ENCODE measurements at regions of chr6 and their contacts with region 1.

Region 1: DNA sequence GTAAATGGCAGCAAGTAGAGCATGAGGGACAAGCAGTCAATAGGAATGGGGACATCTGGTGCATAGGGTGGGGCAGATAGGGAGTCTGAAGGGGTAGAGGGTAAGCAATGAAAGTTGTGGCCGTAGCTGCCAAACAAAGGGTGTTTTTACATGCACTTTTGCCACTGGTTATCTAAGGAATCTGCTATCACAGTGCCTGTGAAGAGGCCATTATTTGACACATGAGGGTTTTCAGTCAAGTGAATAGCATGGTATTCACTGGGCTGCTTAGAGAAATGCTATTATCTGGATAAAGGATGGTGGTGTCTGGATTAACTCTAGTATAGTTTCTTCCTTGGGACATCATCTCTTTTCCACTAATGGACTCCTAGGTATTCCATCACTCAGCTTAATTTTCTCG is 118.2 kb downstream of the CARMIL1 start:
- DNase-seq: no peak
- H3K4me3 ChIP-seq: no peak overlapping the region
- H3K27ac ChIP-seq: no peak overlapping the region
- H3K4me1 ChIP-seq: peaks cover 10% of the 10 kb centered on the region
- H3K27me3 ChIP-seq: no peaks in the 10 kb centered on the region
- CTCF ChIP-seq: no peak

Region 2: DNA sequence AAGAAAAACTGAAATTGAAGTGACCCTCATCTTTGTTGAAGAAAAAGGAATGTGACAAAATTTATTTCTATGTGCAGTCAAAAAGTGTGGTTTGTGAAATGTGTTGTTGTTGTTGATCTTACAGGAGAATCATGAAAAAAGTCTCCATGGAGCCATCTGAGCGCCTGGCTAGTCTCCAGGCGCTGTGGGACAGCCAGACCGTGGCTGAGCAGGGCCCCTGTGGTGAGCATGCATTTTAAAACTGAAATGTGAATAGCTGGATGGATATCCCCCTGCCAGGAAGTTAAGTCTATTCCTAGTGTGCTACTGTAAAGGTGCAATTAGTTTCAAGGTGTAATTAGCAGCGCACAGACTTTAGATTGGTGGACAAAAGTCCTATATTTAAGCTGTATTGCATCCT is 52.4 kb after region 1 on chr6:
- CTCF ChIA-PET with region 1: no interaction called
- dilution Hi-C with region 1: loop called (anchors 5 kb)
- in situ Hi-C with region 1: no loop called
- intact Hi-C with region 1: no loop called
- DNase-seq: no peak
- H3K4me3 ChIP-seq: no peak overlapping the region
- H3K27ac ChIP-seq: no peak overlapping the region
- H3K4me1 ChIP-seq: peaks cover 46% of the 10 kb centered on the region
- H3K27me3 ChIP-seq: no peaks in the 10 kb centered on the region
- CTCF ChIP-seq: no peak

Region 3: GRCh38 chr6:25472306-25472705 is 74.9 kb after region 1 on chr6:
- CTCF ChIA-PET with region 1: no interaction called
- dilution Hi-C with region 1: no loop called
- in situ Hi-C with region 1: no loop called
- intact Hi-C with region 1: no loop called
- DNase-seq: no peak
- H3K4me3 ChIP-seq: no peak overlapping the region
- H3K27ac ChIP-seq: no peak overlapping the region
- H3K4me1 ChIP-seq: peaks cover 18% of the 10 kb centered on the region
- H3K27me3 ChIP-seq: no peaks in the 10 kb centered on the region
- CTCF ChIP-seq: peak; percentile 25 to 41

Measured in mammary epithelial cell (primary cell).